GM12878 (cell line): ENCODE measurements at regions of chr4 and their contacts with region 1.

Region 1: DNA sequence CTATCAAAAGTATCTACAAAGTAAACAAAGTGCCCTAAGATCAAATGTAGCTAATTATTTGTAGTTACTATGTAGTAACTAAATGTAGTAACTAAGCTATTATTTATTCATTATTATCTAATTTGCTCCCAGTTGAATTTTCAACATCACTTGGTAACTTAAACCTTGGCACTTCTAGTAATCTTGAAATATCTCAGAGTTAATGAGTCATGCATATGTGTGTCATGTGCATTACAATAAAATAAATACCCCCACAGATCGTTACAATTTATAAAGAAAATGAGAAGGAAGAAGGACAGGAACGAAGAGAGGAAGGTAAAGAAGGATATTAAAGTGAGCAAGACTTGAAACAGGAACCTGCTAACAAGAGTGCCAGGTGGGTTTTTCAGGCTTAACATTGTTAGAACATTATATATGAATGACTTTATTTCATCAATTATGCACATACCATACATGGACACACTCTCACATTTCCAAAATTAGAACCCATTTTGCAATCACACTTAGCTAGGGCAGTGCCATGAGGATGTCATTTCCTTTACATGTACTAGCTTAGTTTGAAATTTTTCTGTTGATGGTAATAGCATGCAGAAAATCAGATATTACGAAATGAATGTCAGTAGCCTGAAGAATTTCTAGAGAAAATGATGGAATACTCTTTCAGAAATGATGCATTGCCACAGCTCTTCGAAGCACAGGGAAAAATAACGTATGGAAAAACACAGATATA is 1670.4 kb upstream of the AGA start:
- DNase-seq: no peak
- ATAC-seq: no peak
- H3K4me3 ChIP-seq: no peak overlapping the region
- H3K27ac ChIP-seq: no peak overlapping the region
- H3K4me1 ChIP-seq: no peaks in the 10 kb centered on the region
- H3K27me3 ChIP-seq: no peaks in the 10 kb centered on the region
- CTCF ChIP-seq: no peak
- EP300 ChIP-seq: no peak
- POLR2A ChIP-seq: no peak
- RAD21 ChIP-seq: no peak

Region 2: GRCh38 chr4:179123084-179123483 is 10.5 kb after region 1 on chr4:
- CTCF ChIA-PET with region 1: interaction called, 5 read pairs
- POLR2A ChIA-PET with region 1: interaction called, 3 read pairs
- RAD21 ChIA-PET with region 1: interaction called, 3 read pairs
- SMC1A ChIA-PET with region 1: interaction called, 12 read pairs
- in situ Hi-C with region 1: no loop called
- intact Hi-C with region 1: no loop called
- DNase-seq: no peak
- ATAC-seq: no peak
- H3K4me3 ChIP-seq: no peak overlapping the region
- H3K27ac ChIP-seq: no peak overlapping the region
- H3K4me1 ChIP-seq: no peaks in the 10 kb centered on the region
- H3K27me3 ChIP-seq: no peaks in the 10 kb centered on the region
- CTCF ChIP-seq: no peak
- EP300 ChIP-seq: no peak
- POLR2A ChIP-seq: no peak
- RAD21 ChIP-seq: no peak